ENCODE measurements at regions of chr19 and their contacts with region 1.

Region 1: GRCh38 chr19:49148784-49149651 is 6.2 kb downstream of the HRC start:
- DNase-seq: peak; percentile 79
- H3K4me3 Mint-ChIP-seq: peak overlapping the region; percentile 71
- H3K27ac Mint-ChIP-seq: no peak overlapping the region
- H3K4me1 Mint-ChIP-seq: peaks cover 22% of the 10 kb centered on the region
- H3K27me3 Mint-ChIP-seq: peaks cover 60% of the 10 kb centered on the region

Region 2: GRCh38 chr19:48993175-48994034 is 155.6 kb before region 1 on chr19 and contains the starts of genes GYS1 and RUVBL2:
- intact Hi-C with region 1: loop called (anchors 10 kb)
- DNase-seq: peak; percentile 99
- H3K4me3 Mint-ChIP-seq: peak within 1 kb of the TSS; percentile 94
- H3K27ac Mint-ChIP-seq: peak within 1 kb of the TSS; percentile 98
- H3K4me1 Mint-ChIP-seq: peaks cover 30% of the 10 kb centered on the region
- H3K27me3 Mint-ChIP-seq: no peaks in the 10 kb centered on the region
- total RNA-seq, gene GYS1: 68.5 and 70.3 TPM in 2 replicates
- total RNA-seq, gene RUVBL2: 160 and 170 TPM in 2 replicates

Region 3: GRCh38 chr19:49073514-49074378 is 75.3 kb before region 1 on chr19:
- intact Hi-C with region 1: loop called (anchors 1 kb)
- DNase-seq: no peak
- H3K4me3 Mint-ChIP-seq: peak overlapping the region; percentile 1
- H3K27ac Mint-ChIP-seq: no peak overlapping the region
- H3K4me1 Mint-ChIP-seq: peaks cover 6% of the 10 kb centered on the region
- H3K27me3 Mint-ChIP-seq: peaks cover 35% of the 10 kb centered on the region

Region 4: GRCh38 chr19:49097455-49098288 is 51.3 kb before region 1 on chr19:
- intact Hi-C with region 1: loop called (anchors 5 kb)
- DNase-seq: peak; percentile 69
- H3K4me3 Mint-ChIP-seq: no peak overlapping the region
- H3K27ac Mint-ChIP-seq: no peak overlapping the region
- H3K4me1 Mint-ChIP-seq: peaks cover 1% of the 10 kb centered on the region
- H3K27me3 Mint-ChIP-seq: no peaks in the 10 kb centered on the region

Region 5: DNA sequence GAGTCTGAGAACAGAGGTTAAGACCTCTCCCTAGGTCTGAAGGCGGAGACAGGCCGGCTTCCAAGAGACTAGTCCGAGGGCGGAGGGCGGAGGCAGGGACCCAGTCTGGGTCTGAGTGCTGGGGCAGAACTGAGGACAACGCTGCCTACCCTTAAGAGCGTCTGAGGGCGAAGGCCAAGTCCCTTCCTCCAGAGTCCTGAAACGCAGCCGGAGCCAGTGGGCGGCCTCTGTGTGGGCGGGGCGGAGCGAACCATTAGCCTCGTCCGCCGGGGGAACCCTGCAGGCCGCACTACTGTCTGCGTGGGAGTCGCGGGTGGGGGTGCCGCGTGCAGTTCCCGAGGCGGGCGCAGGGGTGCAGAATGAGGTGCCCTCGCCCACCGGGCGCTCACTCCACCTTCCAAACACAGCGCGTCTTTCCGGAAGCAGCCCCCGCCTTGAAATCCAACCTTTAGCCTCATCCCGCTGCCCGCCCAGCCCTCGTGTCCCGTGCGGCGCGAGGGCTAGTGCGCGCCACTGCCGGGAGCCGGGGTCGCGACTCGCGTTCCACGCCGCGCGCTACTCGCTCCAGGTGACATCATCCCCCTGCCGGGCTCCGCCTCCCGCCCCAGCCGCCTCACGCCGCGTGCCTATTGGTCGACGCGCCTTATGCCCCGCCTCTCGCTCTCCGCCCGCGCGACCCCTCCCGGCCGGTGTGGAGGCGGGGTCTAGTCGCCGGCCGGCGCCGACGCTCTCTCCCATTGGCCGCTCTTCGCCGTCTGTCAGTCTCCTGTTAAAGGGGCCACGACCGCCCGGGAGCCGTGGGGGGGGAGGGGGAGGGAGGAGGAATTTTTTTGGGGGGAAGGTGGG is 30.2 kb before region 1 on chr19 and contains the start of gene C19orf73:
- intact Hi-C with region 1: loop called (anchors 5 kb)
- DNase-seq: peak; percentile 93
- H3K4me3 Mint-ChIP-seq: peak within 1 kb of the TSS; percentile 80
- H3K27ac Mint-ChIP-seq: peak within 1 kb of the TSS; percentile 74
- H3K4me1 Mint-ChIP-seq: peaks cover 17% of the 10 kb centered on the region
- H3K27me3 Mint-ChIP-seq: peaks cover 23% of the 10 kb centered on the region
- total RNA-seq, gene C19orf73: 1.7 and 2.3 TPM in 2 replicates

Region 6: DNA sequence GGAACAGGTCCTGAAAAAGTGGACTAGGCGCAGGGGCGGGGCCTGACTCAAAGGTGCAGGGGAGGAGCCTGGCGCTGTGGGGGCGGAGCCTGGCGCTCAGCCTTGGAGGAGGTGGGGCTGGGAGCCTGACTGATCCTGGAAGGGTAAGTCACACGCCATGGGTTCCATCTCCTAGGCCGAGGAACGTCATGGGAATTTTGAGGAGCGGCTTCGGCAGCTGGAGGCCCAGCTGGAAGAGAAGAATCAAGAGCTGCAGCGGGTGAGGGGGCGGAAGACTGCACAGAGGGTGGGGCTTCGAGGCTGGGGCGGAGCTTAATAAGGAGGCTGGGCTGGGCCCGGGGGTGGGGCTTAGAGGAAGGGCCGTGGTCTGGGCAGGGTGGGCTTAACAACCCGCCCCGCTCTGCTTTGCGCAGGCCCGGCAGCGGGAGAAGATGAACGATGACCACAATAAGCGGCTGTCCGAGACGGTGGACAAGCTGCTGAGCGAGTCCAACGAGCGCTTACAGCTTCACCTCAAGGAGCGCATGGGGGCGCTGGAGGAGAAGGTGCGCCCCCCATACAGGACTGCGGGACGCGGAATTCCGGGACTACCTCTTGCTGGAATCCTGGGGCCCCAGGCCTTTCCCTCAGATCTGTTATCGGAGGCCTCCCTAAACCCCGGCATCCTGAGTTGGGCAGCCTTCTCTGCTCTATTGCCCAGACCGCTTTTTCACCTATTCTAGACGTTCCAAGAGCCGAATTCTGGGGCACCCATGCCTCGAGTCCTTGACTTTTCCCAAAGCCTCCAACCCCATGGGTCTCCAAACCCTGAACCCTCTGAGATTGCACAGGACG is 15.2 kb before region 1 on chr19:
- intact Hi-C with region 1: no loop called
- DNase-seq: peak; percentile 49
- H3K4me3 Mint-ChIP-seq: peak overlapping the region; percentile 77
- H3K27ac Mint-ChIP-seq: no peak overlapping the region
- H3K4me1 Mint-ChIP-seq: peaks cover 12% of the 10 kb centered on the region
- H3K27me3 Mint-ChIP-seq: no peaks in the 10 kb centered on the region

Region 7: DNA sequence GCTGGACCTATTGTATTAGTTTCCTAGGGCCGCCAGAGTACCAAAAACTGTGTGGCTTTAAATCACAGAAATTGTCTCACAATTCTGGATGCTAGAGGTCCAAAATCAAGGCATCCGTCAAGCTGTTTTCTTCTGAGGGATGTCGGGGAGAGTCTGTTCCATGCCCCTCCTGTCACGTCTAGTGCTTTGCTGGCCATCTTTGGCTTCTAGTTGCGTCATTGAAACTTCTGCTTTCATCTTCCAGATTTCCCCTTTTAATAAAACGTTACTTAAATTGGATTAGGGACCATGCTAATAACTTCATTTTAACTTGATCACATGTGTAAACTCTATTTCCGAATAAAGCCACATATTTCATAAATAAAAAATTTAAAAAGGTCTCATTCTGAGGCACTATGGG is 56.1 kb after region 1 on chr19:
- intact Hi-C with region 1: loop called (anchors 5 kb)
- DNase-seq: no peak
- H3K4me3 Mint-ChIP-seq: no peak overlapping the region
- H3K27ac Mint-ChIP-seq: no peak overlapping the region
- H3K4me1 Mint-ChIP-seq: peaks cover 2% of the 10 kb centered on the region
- H3K27me3 Mint-ChIP-seq: no peaks in the 10 kb centered on the region

Measured in activated T-helper 2 cell treated with anti-CD3 and anti-CD28 coated beads, Interferon-gamma antibody, Interleukin-2, Interleukin-4, amounts not matched to agents 10 μg/mL and 5 μg/mL and 100 μg/mL, durations not matched to agents 14 hours and 24 hours and 36 hours (primary cell).